Endothelial cell of umbilical vein (primary cell): ENCODE measurements at regions of chr6 and their contacts with region 1.

Region 1: GRCh38 chr6:32195652-32195901 is 3.1 kb upstream of the GPSM3 start:
- DNase-seq: peak; percentile 100
- H3K4me3 ChIP-seq: no peak overlapping the region
- H3K27ac ChIP-seq: peak overlapping the region; percentile 99
- H3K4me1 ChIP-seq: peaks cover 36% of the 10 kb centered on the region
- H3K27me3 ChIP-seq: no peaks in the 10 kb centered on the region
- CTCF ChIP-seq: peak; percentile 21 to 57
- POLR2A ChIP-seq: no peak

Region 2: GRCh38 chr6:31139599-31139998 is 1056.0 kb before region 1 on chr6:
- CTCF ChIA-PET with region 1: no interaction called
- POLR2A ChIA-PET with region 1: no interaction called
- dilution Hi-C with region 1: no loop called
- intact Hi-C with region 1: no loop called
- DNase-seq: no peak
- H3K4me3 ChIP-seq: no peak overlapping the region
- H3K27ac ChIP-seq: no peak overlapping the region
- H3K4me1 ChIP-seq: peaks cover 8% of the 10 kb centered on the region
- H3K27me3 ChIP-seq: no peaks in the 10 kb centered on the region
- CTCF ChIP-seq: no peak
- POLR2A ChIP-seq: no peak

Region 3: GRCh38 chr6:32047850-32048766 is 147.5 kb before region 1 on chr6:
- CTCF ChIA-PET with region 1: no interaction called
- POLR2A ChIA-PET with region 1: no interaction called
- dilution Hi-C with region 1: no loop called
- intact Hi-C with region 1: loop called (anchors 10 kb)
- DNase-seq: peak; percentile 39
- H3K4me3 ChIP-seq: no peak overlapping the region
- H3K27ac ChIP-seq: no peak overlapping the region
- H3K4me1 ChIP-seq: peaks cover 10% of the 10 kb centered on the region
- H3K27me3 ChIP-seq: peaks cover 0 to 3% of the 10 kb centered on the region in 2 experiments
- CTCF ChIP-seq: peak; percentile 64 to 91
- POLR2A ChIP-seq: no peak

Region 4: DNA sequence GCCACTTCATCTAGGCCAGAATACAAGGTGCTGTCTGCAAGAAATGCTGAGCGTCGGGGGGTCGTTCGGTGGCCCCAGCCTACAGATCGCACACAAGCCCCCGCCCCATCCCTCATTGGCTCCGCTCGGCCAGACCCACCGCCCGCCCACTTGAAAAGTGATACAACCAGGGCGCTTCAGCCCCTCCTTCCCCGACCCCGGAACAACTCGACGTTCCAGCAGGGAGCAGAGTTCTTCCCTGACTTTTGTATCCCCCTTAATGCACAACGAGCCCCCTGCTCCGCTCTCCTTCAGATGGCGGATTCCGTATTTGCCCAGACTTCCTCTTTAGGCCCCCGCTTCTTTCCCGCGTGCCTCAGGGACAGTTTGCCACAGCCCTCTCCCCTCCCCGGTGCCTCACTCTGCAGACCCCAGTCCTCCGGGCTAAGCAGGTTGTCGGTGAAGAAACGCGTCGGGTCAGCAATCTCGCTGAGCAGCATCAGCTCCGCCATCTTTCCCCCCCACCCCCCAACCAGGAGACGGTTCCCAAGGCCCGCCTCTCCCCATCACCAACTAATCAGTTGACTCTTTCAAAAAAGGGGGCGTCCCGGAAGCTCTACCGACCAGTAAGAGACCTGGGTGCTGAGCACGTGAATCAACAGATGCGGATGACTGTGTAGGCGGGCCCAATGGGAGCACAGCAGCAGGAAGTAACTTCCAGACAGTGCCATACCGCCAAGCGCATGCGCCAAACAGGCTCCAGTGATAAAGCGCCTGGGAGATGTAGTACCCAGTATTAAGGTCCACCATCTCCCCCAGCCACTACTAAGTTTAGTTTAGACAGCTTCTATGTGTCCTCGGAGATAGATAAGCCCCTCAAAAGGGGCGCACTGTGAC is 67.6 kb before region 1 on chr6 and contains the start of gene ATF6B:
- CTCF ChIA-PET with region 1: interaction called, 17 read pairs
- POLR2A ChIA-PET with region 1: interaction called, 5 read pairs
- dilution Hi-C with region 1: no loop called
- intact Hi-C with region 1: loop called (anchors 1 kb)
- DNase-seq: peak; percentile 99
- H3K4me3 ChIP-seq: peak within 1 kb of the TSS; percentile 71 to 99 (median 84)
- H3K27ac ChIP-seq: peak within 1 kb of the TSS; percentile 83
- H3K4me1 ChIP-seq: peaks cover 20% of the 10 kb centered on the region
- H3K27me3 ChIP-seq: no peaks in the 10 kb centered on the region
- CTCF ChIP-seq: no peak
- POLR2A ChIP-seq: no peak
- total RNA-seq, gene ATF6B: 102 and 106 TPM in 2 replicates

Region 5: DNA sequence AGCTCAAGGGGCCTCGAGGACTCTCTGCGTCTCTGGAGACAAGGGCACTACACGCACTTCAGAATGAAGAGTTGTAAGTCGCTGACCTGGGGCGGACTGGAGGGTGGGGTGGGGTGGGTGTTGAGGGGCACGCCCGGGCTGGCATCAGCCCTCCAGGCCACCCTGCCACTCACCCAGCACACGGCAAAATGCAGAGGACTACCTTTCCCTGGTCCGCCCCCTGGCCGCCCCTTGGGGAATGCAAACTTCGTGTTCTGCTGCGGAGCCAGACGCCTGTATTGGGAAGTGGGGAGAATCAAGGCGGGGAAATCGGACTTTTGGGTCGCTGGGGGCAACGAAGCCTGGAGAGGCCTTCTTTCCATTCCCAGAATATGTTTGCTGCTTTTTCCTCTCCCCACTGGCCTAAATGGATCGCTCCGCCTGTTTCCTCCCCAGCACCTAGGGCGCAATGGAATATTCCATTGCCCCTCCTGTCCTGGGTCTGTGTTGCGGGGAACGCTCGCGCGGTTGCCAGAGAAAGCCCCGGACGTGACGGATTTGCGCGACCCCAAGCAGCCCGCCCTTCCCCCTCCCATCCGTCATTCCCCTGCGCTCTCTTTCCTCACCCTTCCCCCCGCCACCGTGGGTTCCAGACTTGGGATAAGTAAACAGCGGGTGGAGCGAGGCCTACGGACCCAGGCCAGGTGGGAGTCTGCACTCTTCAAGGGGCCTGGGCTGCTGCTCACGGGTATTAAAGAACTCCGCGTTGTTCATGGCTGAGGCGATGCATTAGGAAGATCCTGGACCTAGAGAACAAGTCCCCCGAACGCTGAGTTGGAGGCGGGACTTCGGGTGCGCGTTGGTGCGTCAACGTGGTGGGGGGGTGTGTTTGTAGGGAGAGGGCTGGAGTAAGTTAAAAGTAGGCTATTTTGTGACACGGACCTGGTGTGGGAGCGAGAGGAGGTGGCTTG is 41.7 kb before region 1 on chr6 and contains the start of gene PPT2:
- CTCF ChIA-PET with region 1: interaction called, 9 read pairs
- POLR2A ChIA-PET with region 1: interaction called, 4 read pairs
- dilution Hi-C with region 1: no loop called
- intact Hi-C with region 1: loop called (anchors 1 kb)
- DNase-seq: peak; percentile 94
- H3K4me3 ChIP-seq: peak within 1 kb of the TSS; percentile 41 to 71 (median 60)
- H3K27ac ChIP-seq: peak within 1 kb of the TSS; percentile 51
- H3K4me1 ChIP-seq: peaks cover 24% of the 10 kb centered on the region
- H3K27me3 ChIP-seq: peaks cover 4 to 5% of the 10 kb centered on the region in 2 experiments
- CTCF ChIP-seq: peak in 1 of 2 donors; percentile 16
- POLR2A ChIP-seq: peak; percentile 61
- total RNA-seq, gene PPT2: 27.2 and 27.6 TPM in 2 replicates

Region 6: DNA sequence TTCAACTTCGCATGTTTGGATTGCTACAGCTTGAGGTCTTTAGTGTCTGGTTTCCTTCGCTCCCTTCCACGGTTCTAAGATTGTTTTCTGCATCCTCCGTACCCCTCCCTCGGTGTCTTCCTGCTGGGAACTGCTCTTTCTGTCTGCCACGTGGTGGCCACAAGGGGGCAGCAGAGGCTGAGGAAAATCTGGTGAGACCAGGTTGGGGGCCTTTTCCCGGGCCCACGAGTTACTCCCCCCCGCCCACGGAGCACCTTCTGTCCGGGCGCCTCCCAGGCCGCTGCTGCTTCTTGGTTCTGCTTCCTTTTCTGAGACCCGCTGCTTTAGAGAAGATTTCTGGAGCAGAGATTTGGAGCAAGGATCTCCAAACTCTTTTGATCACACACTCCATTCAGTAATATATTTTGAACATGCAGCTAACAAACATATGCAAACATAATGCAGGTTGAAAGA is 49.4 kb after region 1 on chr6:
- CTCF ChIA-PET with region 1: interaction called, 3 read pairs
- POLR2A ChIA-PET with region 1: interaction called, 3 read pairs
- dilution Hi-C with region 1: no loop called
- intact Hi-C with region 1: loop called (anchors 1 kb)
- DNase-seq: peak; percentile 85
- H3K4me3 ChIP-seq: no peak overlapping the region
- H3K27ac ChIP-seq: no peak overlapping the region
- H3K4me1 ChIP-seq: peaks cover 3% of the 10 kb centered on the region
- H3K27me3 ChIP-seq: no peaks in the 10 kb centered on the region
- CTCF ChIP-seq: peak; percentile 72 to 89
- POLR2A ChIP-seq: no peak

Region 7: GRCh38 chr6:32267035-32267434 is 71.5 kb after region 1 on chr6:
- CTCF ChIA-PET with region 1: no interaction called
- POLR2A ChIA-PET with region 1: no interaction called
- dilution Hi-C with region 1: no loop called
- intact Hi-C with region 1: no loop called
- DNase-seq: no peak
- H3K4me3 ChIP-seq: no peak overlapping the region
- H3K27ac ChIP-seq: no peak overlapping the region
- H3K4me1 ChIP-seq: no peaks in the 10 kb centered on the region
- H3K27me3 ChIP-seq: no peaks in the 10 kb centered on the region
- CTCF ChIP-seq: no peak
- POLR2A ChIP-seq: no peak

Region 8: GRCh38 chr6:32313964-32314363 is 118.4 kb after region 1 on chr6:
- CTCF ChIA-PET with region 1: no interaction called
- POLR2A ChIA-PET with region 1: no interaction called
- dilution Hi-C with region 1: no loop called
- intact Hi-C with region 1: no loop called
- DNase-seq: no peak
- H3K4me3 ChIP-seq: no peak overlapping the region
- H3K27ac ChIP-seq: no peak overlapping the region
- H3K4me1 ChIP-seq: no peaks in the 10 kb centered on the region
- H3K27me3 ChIP-seq: peaks cover 0 to 10% of the 10 kb centered on the region in 2 experiments
- CTCF ChIP-seq: no peak
- POLR2A ChIP-seq: no peak

Region 9: GRCh38 chr6:32369675-32370074 is 174.1 kb after region 1 on chr6:
- CTCF ChIA-PET with region 1: no interaction called
- POLR2A ChIA-PET with region 1: no interaction called
- dilution Hi-C with region 1: no loop called
- intact Hi-C with region 1: loop called (anchors 2 kb)
- DNase-seq: peak; percentile 93
- H3K4me3 ChIP-seq: no peak overlapping the region
- H3K27ac ChIP-seq: peak overlapping the region; percentile 96
- H3K4me1 ChIP-seq: peaks cover 25% of the 10 kb centered on the region
- H3K27me3 ChIP-seq: peaks cover 0 to 5% of the 10 kb centered on the region in 2 experiments
- CTCF ChIP-seq: no peak
- POLR2A ChIP-seq: no peak

Region 10: DNA sequence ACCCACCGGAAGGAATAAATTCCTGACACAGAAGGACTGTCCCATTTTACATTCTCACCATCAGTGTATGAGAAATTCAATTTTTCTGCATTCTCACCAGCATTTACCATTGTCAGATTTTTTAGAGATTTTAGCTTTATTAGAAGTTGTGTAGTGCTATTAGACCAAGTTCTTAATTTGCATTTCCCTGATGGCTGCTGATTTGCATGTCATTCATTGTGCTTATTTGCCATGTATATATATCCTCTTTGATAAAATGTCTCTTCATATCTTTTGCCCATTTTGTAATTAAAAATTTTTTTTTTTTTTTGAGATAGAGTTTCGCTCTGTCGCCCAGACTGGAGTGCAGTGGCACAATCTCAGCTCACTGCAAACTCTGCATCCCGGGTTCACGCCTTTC is 344.3 kb after region 1 on chr6:
- CTCF ChIA-PET with region 1: no interaction called
- POLR2A ChIA-PET with region 1: no interaction called
- dilution Hi-C with region 1: no loop called
- intact Hi-C with region 1: no loop called
- DNase-seq: no peak
- H3K4me3 ChIP-seq: no peak overlapping the region
- H3K27ac ChIP-seq: no peak overlapping the region
- H3K4me1 ChIP-seq: no peaks in the 10 kb centered on the region
- H3K27me3 ChIP-seq: no peaks in the 10 kb centered on the region
- CTCF ChIP-seq: no peak
- POLR2A ChIP-seq: no peak